ENCODE measurements at regions of chrX and their contacts with region 1.

Region 1: GRCh38 chrX:72609313-72609712 is 36.7 kb upstream of the HDAC8 start:
- DNase-seq: no peak
- ATAC-seq: no peak
- H3K4me3 ChIP-seq: no peak overlapping the region
- H3K4me3 Mint-ChIP-seq: no peak overlapping the region
- H3K27ac ChIP-seq: no peak overlapping the region
- H3K27ac Mint-ChIP-seq: no peak overlapping the region
- H3K4me1 ChIP-seq: no peaks in the 10 kb centered on the region
- H3K4me1 Mint-ChIP-seq: peaks cover 0 to 4% (median 0%) of the 10 kb centered on the region in 7 donors
- H3K27me3 ChIP-seq: no peaks in the 10 kb centered on the region
- H3K27me3 Mint-ChIP-seq: peaks cover 0 to 3% (median 0%) of the 10 kb centered on the region in 5 donors

Region 2: DNA sequence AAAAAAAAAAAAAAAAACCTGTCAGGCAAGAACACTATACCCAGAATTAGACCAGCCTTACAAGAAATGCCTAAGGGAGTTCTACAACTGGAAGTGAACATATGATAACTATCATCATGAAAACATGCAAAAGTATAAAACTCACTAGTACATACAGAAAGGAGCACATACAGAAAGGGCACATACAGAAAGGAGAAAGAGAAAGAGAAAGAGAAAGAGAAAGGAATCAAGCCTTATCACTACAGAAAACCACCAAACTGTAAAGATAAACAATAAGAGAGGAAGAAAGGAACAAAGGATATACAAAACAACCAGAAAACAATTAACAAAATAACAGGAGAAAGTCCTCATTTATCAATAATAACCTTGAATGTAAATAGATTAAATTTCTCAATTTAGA is 54.4 kb after region 1 on chrX:
- CTCF ChIA-PET with region 1: no interaction called
- POLR2A ChIA-PET with region 1: no interaction called
- intact Hi-C with region 1: loop called in 1 of 2 experiments (anchors 10 kb)
- DNase-seq: no peak
- ATAC-seq: no peak
- H3K4me3 ChIP-seq: no peak overlapping the region
- H3K4me3 Mint-ChIP-seq: peak overlapping the region in 1 of 10 donors; percentile 63
- H3K27ac ChIP-seq: no peak overlapping the region
- H3K27ac Mint-ChIP-seq: peak overlapping the region in 1 of 9 donors; percentile 79
- H3K4me1 ChIP-seq: no peaks in the 10 kb centered on the region
- H3K4me1 Mint-ChIP-seq: peaks cover 0 to 21% (median 0%) of the 10 kb centered on the region in 7 donors
- H3K27me3 ChIP-seq: no peaks in the 10 kb centered on the region
- H3K27me3 Mint-ChIP-seq: no peaks in the 10 kb centered on the region

Region 3: GRCh38 chrX:72735561-72735960 is 126.2 kb after region 1 on chrX:
- CTCF ChIA-PET with region 1: no interaction called
- POLR2A ChIA-PET with region 1: no interaction called
- intact Hi-C with region 1: no loop called
- DNase-seq: no peak
- ATAC-seq: no peak
- H3K4me3 ChIP-seq: no peak overlapping the region
- H3K4me3 Mint-ChIP-seq: no peak overlapping the region
- H3K27ac ChIP-seq: no peak overlapping the region
- H3K27ac Mint-ChIP-seq: no peak overlapping the region
- H3K4me1 ChIP-seq: no peaks in the 10 kb centered on the region
- H3K4me1 Mint-ChIP-seq: no peaks in the 10 kb centered on the region
- H3K27me3 ChIP-seq: no peaks in the 10 kb centered on the region
- H3K27me3 Mint-ChIP-seq: peaks cover 22 to 27% (median 25%) of the 10 kb centered on the region in 5 donors

Measured in naive thymus-derived CD4-positive, alpha-beta T cell (primary cell).